ENCODE measurements at regions of chr6 and their contacts with region 1.

Region 1: GRCh38 chr6:7541175-7542064 is at the start of gene DSP:
- DNase-seq: peak; percentile 65 to 96
- H3K4me3 ChIP-seq: peak within 1 kb of the TSS; percentile 81
- H3K27ac ChIP-seq: peak within 1 kb of the TSS; percentile 79
- H3K4me1 ChIP-seq: peaks cover 28% of the 10 kb centered on the region
- H3K27me3 ChIP-seq: no peaks in the 10 kb centered on the region
- CTCF ChIP-seq: no peak
- total RNA-seq, gene DSP: 109 and 117 TPM in 2 replicates

Region 2: GRCh38 chr6:7389451-7390225 is 151.8 kb before region 1 on chr6 and contains the starts of genes CAGE1 and RIOK1:
- CTCF ChIA-PET with region 1: interaction called, 8 read pairs
- POLR2A ChIA-PET with region 1: no interaction called
- intact Hi-C with region 1: loop called (anchors 2 kb)
- DNase-seq: peak; percentile 86 to 96
- H3K4me3 ChIP-seq: peak within 1 kb of the TSS; percentile 80
- H3K27ac ChIP-seq: peak within 1 kb of the TSS; percentile 89
- H3K4me1 ChIP-seq: peaks cover 19% of the 10 kb centered on the region
- H3K27me3 ChIP-seq: no peaks in the 10 kb centered on the region
- CTCF ChIP-seq: 0 out of 2 replicates have a peak, but pooled peaks have one; percentile 29
- total RNA-seq, gene CAGE1: 0.13 TPM in 2 replicates
- total RNA-seq, gene RIOK1: 16.9 and 24.9 TPM in 2 replicates

Region 3: DNA sequence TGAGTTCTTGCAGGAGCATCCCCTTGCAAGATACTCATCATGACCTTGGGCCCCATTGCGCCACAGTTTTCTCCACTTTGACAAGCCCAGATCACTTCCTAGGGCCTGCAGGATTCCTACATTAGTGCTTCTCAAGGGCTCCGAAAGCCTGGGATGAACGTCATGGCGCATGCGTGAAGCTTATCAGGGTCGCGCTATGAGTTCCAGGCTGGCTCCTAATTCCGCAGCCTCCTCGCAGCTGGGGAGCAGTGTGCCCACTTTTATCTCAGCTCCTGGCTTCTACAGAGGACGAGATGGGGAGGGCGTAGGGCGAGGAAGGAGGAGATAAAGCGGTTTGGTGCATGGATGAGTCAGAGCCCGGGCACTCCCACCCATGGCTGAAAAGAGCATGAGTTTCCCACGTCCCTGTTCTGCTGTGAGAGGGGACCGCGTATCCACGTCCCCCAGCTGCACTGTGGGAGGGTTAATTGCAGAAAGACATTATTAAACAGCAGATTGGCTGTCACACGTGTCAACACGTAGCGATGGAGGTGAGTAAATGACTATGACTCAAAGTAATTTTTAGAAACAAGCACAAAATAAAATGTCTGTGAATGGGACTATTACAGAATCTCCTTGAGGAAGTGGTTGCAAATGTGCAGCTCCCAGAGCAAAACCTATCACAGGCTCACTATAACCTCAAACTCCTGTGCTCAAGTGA is 72.9 kb before region 1 on chr6:
- CTCF ChIA-PET with region 1: no interaction called
- POLR2A ChIA-PET with region 1: interaction called, 3 read pairs
- intact Hi-C with region 1: loop called (anchors 5 kb)
- DNase-seq: peak; percentile 39 to 48
- H3K4me3 ChIP-seq: peak overlapping the region; percentile 47
- H3K27ac ChIP-seq: no peak overlapping the region
- H3K4me1 ChIP-seq: peaks cover 12% of the 10 kb centered on the region; the same call in 1 of the 2 replicates
- H3K27me3 ChIP-seq: no peaks in the 10 kb centered on the region
- CTCF ChIP-seq: no peak

Region 4: GRCh38 chr6:7505187-7505811 is 36.1 kb before region 1 on chr6:
- CTCF ChIA-PET with region 1: no interaction called
- POLR2A ChIA-PET with region 1: interaction called, 4 read pairs
- intact Hi-C with region 1: loop called (anchors 1 kb)
- DNase-seq: peak; percentile 93 to 97
- H3K4me3 ChIP-seq: peak overlapping the region; percentile 17; the same call in 1 of the 2 replicates
- H3K27ac ChIP-seq: peak overlapping the region; percentile 88
- H3K4me1 ChIP-seq: peaks cover 20% of the 10 kb centered on the region
- H3K27me3 ChIP-seq: no peaks in the 10 kb centered on the region
- CTCF ChIP-seq: no peak

Region 5: DNA sequence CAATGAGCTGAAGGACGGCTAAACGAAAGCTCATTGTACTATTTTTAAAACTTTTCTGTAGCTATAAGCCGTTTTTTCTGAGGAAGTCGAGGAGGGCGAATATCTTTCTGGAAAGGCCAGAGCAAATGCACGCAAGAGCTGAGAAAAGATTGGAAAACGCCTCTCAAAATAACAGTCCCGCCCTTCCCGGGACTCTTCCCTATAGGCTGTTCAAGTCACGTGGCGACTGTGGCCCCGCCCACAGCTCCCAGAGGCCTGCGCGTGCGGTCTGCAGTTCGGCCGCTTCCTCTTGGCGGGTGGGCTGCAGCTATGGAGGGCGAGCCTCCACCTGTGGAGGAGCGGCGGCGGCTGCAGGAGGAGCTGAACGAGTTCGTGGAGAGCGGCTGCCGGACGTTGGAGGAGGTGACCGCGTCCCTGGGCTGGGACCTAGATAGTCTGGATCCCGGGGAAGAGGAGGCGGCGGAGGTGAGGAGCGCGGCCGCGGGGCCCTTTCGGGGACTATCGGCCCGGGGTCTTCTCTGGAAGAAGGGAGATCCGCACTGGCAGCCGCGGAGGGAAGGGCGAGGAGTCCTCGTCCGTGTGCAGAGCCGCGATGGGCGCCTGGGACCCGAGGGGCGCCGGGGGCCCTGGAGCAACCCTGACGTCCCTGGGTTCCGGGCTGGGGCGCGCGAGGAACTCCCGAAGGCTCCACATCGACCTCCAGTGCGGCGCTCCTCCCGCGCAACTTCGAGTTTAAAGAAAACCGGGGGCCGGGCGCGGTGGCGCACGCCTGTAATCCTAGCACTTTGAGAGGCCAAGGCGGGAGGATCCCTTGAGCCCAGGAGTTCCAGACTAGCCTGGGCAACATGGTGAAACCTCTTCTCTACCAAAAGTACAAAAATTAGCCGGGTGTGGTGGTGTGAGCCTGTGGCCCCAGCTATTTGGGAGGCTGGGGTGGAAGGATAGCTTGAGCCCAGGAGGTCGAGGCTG is 48.8 kb after region 1 on chr6 and contains the start of gene SNRNP48:
- CTCF ChIA-PET with region 1: no interaction called
- POLR2A ChIA-PET with region 1: no interaction called
- intact Hi-C with region 1: loop called (anchors 5 kb)
- DNase-seq: peak; percentile 78 to 93
- H3K4me3 ChIP-seq: peak within 1 kb of the TSS; percentile 93
- H3K27ac ChIP-seq: no peak within 1 kb of the TSS
- H3K4me1 ChIP-seq: peaks cover 18% of the 10 kb centered on the region; the same call in 1 of the 2 replicates
- H3K27me3 ChIP-seq: no peaks in the 10 kb centered on the region
- CTCF ChIP-seq: no peak
- total RNA-seq, gene SNRNP48: 18.6 and 21.7 TPM in 2 replicates

Region 6: DNA sequence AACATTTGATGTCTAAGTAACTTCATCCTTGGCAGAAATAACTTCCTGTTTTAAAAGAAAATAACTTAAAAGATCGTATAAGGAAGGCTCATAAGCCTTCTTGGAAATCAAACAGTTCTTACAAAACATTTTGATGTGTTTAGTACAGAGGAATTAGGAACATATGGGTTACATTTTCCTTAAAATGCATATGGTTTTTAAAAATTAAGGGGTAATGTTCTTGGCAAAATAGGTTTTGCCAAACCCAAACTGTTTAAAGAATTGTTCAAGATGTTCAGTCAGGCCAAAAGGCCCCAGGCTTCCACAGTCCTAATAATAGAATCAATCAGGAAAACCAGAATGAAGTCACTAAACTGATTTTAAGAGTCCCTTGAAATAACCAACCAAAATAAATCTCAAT is 1036.6 kb after region 1 on chr6:
- CTCF ChIA-PET with region 1: no interaction called
- POLR2A ChIA-PET with region 1: no interaction called
- intact Hi-C with region 1: no loop called
- DNase-seq: no peak
- H3K4me3 ChIP-seq: no peak overlapping the region
- H3K27ac ChIP-seq: no peak overlapping the region
- H3K4me1 ChIP-seq: no peaks in the 10 kb centered on the region
- H3K27me3 ChIP-seq: no peaks in the 10 kb centered on the region
- CTCF ChIP-seq: no peak